Activated CD4-positive, alpha-beta T cell treated with anti-CD3 and anti-CD28 coated beads for 36 hours (primary cell): ENCODE measurements at regions of chr17 and their contacts with region 1.

Region 1: GRCh38 chr17:82292251-82293154 is 19.0 kb upstream of the CSNK1D start:
- DNase-seq: peak; percentile 96
- ATAC-seq: peak; percentile 89
- H3K4me3 Mint-ChIP-seq: peak overlapping the region; percentile 78
- H3K27ac Mint-ChIP-seq: peak overlapping the region; percentile 85
- H3K4me1 Mint-ChIP-seq: peaks cover 71% of the 10 kb centered on the region
- H3K27me3 Mint-ChIP-seq: no peaks in the 10 kb centered on the region

Region 2: DNA sequence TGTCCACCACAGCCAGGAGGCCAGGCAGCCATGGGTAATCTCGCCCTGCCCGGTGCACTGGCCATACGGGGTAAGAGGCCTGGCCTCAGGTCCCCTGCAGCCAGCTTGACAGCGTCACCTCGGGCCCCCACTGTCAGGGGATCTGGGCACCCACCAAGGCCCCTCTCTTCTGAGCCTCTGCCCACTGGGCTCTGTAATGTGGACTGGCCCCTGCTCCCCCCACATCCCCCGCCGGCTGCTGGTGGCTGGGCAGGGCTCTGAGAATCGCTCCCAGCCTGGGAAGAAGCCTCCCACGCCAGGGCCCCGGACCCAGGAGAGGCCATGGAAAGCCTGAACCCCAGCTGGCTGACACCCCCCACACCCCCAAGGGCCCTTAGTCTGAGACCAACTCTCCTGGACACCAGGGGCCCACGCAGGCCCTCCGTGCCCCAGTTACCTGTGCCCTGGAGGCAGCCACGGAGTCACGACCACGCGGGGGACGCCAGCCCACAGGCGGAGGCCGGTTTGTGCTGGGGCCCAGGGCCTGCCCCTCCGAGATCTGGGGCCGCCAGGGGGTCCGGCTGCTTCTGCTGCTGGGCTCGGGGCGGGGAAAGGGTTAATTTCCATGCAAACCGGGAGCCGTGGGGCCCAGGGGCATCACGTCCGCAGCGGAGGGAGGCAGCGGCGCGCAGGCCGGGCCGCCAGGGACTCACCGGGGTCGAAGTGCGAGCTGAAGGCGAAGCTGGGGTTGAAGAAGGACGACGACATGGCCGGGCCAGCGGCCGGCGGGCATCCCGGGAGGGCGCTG is 1127.1 kb before region 1 on chr17 and contains the start of gene PVALEF:
- CTCF ChIA-PET with region 1: no interaction called
- POLR2A ChIA-PET with region 1: no interaction called
- intact Hi-C with region 1: no loop called
- DNase-seq: no peak
- ATAC-seq: no peak
- H3K4me3 Mint-ChIP-seq: no peak within 1 kb of the TSS
- H3K27ac Mint-ChIP-seq: no peak within 1 kb of the TSS
- H3K4me1 Mint-ChIP-seq: no peaks in the 10 kb centered on the region
- H3K27me3 Mint-ChIP-seq: peaks cover 16% of the 10 kb centered on the region
- total RNA-seq, gene PVALEF: not detected

Region 3: GRCh38 chr17:82120148-82120547 is 172.4 kb before region 1 on chr17:
- CTCF ChIA-PET with region 1: interaction called, 3 read pairs
- POLR2A ChIA-PET with region 1: interaction called, 3 read pairs
- intact Hi-C with region 1: loop called in 1 of 2 experiments (anchors 10 kb)
- DNase-seq: peak; percentile 68
- ATAC-seq: peak; percentile 96
- H3K4me3 Mint-ChIP-seq: no peak overlapping the region
- H3K27ac Mint-ChIP-seq: peak overlapping the region; percentile 82
- H3K4me1 Mint-ChIP-seq: peaks cover 43% of the 10 kb centered on the region
- H3K27me3 Mint-ChIP-seq: no peaks in the 10 kb centered on the region

Region 4: DNA sequence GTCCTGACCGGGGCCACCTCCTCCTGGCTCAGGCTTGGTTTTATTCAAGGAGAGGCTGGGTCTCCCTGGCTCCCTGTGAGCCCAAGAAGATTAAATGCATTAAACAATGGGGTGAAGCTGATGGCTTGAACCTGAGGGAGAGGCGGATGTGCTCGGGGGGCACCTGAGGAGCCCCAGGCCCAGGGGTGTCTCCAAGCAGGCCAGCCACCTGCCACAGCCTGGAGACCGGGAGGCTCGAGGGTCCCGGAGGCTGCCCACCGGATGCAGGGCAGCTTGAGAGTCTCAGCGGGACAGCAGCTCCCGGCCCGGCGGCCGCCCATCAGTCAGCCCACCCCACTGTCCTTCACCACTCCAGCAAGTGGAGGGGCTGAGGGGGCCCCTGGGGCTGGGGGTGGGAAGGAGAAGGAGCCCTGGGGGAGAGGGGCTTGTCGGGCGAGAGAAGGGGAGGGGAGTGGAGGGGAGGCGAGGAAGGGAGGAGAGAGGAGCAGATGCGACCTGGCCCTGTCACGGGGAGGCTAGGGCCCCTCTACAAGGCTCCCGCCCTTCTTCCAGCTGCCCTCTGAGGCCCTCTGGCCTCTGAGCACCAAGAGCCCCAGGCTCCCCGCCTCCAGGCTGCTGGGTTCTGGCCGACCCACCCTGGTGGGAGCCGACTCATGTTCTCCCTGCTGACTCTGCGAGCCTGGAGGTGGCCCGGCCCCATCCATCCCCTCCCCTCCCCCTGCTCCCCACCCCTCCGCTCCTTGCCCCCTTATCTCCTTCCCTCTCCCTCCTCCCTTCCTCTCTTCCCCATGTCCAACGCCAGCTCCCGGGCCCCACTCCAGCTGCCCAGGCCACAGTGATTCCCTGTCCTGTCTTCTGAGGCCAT is 11.7 kb after region 1 on chr17:
- CTCF ChIA-PET with region 1: interaction called, 15 read pairs
- POLR2A ChIA-PET with region 1: interaction called, 82 read pairs
- intact Hi-C with region 1: loop called in 1 of 2 experiments (anchors 1 kb)
- DNase-seq: peak; percentile 31
- ATAC-seq: no peak
- H3K4me3 Mint-ChIP-seq: peak overlapping the region; percentile 80
- H3K27ac Mint-ChIP-seq: peak overlapping the region; percentile 100
- H3K4me1 Mint-ChIP-seq: peaks cover 72% of the 10 kb centered on the region
- H3K27me3 Mint-ChIP-seq: no peaks in the 10 kb centered on the region